ENCODE measurements at regions of chr22 and their contacts with region 1.

Region 1: GRCh38 chr22:50326959-50327710 is at the start of gene DENND6B:
- DNase-seq: peak in 41 of 42 donors; percentile 63 to 91 (median 81)

Region 2: GRCh38 chr22:50276143-50276542 is 51.0 kb before region 1 on chr22:
- intact Hi-C with region 1: loop called (anchors 5 kb)
- DNase-seq: peak; percentile 56 to 92 (median 80)

Region 3: DNA sequence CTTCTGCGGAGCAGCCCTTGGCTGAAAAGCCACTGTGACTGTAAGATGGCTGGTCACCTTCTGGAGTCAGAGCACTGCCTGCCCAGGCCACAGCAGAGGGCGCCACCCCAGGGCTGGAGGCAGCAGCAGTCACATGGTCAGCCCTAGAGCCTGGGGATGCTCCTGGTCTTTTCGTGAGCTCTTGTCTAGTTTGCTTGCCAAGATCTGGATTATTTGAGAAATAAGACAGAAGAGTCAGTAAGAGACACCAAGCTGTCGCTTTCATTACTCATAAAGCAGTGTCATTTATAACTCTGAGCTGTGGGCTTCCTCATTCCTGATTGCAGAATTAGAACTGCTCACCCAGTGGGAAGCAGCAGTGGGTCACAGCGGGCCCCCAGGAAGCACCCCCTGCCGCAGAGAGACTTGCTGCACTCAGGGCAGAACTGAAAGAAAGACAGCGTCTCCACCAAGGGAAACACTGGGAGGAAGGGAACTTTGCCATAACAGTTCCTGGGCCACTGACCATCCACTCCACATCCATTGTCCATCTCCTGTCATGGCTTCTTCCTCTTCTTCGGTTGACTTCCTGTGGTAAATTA is 72.7 kb after region 1 on chr22:
- intact Hi-C with region 1: no loop called
- DNase-seq: peak; percentile 21 to 79 (median 55)

Region 4: GRCh38 chr22:50417411-50418210 is 90.5 kb after region 1 on chr22:
- intact Hi-C with region 1: no loop called
- DNase-seq: no peak

Measured in head of caudate nucleus (tissue), 42 donors.